Head of caudate nucleus (tissue), 42 donors: ENCODE measurements at regions of chr3 and their contacts with region 1.

Region 1: DNA sequence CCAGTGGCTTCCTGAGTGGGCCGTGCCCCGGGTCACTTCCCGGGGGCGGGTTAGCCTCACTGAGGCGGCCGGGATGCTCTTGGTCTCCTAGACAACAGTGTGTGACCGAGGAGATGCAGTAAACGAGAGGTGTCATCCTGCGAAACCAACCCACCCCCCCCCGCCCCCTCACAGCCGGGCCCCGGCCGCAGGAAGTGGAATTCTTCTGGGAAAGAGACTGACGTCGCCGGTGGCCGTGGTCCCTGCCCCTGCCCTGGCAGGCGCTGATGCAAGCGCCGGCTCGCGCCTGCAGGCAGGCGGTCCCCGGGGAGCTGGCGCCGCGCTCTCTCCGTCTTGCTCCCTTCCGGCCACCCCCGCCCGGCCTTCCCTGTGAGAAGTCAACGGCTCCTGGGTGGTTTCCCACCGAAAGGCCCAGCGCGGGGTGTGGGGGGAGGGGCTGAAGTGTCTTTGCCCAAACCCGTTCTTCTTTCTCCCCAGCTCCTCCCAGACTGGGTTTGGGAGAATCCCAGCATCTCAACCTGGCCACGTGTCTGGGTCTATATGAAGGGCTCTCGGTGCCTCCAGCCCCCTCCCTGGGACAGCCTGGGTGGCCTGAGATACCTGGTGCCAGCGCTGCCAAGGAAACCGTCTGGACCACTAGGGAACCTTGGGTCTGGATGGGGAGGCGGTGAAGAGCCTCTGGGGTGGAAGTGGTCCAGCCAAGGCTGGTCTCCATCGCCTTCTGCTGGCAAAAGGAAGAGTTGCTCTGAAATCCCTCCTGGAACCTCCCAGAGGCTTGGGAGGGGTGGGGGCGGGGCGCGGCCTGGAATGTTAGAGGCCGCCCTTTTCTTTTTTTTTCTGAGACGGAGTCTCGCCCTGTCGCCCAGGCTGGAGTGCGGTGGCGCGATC is 47.3 kb downstream of the BHLHE40 start:
- DNase-seq: peak; percentile 54 to 91 (median 77)

Region 2: DNA sequence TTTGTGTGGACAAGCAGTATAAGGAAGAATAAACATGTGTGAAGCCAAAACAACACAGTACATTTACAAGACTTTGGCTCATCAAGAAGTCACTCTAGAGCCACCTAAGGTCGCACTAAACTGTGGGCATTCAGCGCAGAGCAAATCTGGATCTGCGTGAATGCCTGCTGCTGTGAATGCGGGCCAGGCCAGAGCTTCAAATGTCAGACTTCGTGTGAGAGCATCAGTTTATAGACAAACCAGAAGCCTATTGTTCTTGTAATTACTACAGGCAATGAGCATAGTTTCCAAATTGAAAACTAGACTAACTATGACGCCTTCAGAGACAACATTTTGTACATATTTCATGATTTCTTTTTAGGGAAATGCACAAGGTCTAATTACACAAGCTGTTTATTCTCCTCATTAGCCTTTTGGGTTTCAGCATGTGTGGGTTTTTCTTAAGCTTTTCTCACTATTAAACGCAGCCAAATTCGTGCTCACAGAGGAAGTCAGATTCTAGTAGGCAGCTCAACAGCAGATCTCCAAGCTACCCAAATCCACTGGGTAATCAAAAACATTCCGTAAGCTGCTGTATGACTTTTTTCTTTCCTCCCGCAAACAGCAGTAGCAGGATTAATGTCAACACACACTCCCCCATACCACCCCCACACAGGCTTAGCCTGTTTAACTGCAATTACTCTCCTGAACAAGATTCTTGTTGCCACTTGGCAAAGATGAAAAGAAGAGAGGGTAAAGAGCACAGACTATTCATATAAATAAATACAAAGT is 807.9 kb before region 1 on chr3:
- intact Hi-C with region 1: no loop called
- DNase-seq: peak in 35 of 42 donors; percentile 5 to 57 (median 18)

Region 3: GRCh38 chr3:4986782-4987537 is 39.6 kb before region 1 on chr3:
- intact Hi-C with region 1: loop called (anchors 5 kb)
- DNase-seq: peak; percentile 46 to 86 (median 68)